GM10248 (cell line): ENCODE measurements at regions of chr2 and their contacts with region 1.

Region 1: DNA sequence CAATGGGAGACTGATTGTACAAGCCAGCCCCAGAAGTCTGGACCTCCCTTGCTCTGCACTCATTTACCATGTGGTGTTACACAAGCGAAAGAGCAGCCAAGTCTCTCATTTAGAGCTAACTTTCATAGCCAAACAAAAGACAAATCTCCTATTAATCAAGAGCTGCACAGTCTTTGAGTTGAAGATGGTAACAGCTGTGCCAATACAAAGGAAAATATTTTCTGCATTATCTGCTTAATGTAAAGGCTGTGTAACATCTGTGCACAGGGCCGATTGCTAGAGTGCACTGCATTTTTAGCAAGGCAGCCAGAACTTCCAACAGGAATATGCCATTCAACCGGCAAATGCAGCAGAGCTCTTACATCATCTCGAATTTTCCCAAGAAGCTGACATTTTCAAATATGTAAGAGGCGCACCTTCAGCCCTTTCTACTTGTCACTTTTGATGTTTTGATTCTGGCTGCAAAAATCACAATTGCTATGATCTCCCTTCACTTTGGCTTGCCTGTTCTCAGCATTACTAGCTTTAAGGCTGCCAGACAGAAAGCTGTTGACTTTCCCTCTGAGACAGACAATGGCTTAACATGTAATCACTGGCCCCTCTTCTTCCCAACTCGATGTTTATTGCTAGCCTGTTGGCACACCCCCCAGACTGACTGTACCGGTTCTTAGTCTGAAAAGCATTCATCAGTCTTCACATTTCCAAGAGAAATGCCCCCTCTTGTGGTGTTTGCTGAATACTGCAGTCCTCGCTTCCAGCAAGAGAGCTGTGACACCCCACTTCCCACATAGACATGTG is 96.9 kb upstream of the TANK start:
- DNase-seq: peak; percentile 48
- CTCF ChIP-seq: peak; percentile 89

Region 2: GRCh38 chr2:160324161-160324800 is 739.1 kb before region 1 on chr2:
- CTCF ChIA-PET with region 1: interaction called, 18 read pairs
- POLR2A ChIA-PET with region 1: no interaction called
- DNase-seq: peak; percentile 29
- CTCF ChIP-seq: peak; percentile 60

Region 3: DNA sequence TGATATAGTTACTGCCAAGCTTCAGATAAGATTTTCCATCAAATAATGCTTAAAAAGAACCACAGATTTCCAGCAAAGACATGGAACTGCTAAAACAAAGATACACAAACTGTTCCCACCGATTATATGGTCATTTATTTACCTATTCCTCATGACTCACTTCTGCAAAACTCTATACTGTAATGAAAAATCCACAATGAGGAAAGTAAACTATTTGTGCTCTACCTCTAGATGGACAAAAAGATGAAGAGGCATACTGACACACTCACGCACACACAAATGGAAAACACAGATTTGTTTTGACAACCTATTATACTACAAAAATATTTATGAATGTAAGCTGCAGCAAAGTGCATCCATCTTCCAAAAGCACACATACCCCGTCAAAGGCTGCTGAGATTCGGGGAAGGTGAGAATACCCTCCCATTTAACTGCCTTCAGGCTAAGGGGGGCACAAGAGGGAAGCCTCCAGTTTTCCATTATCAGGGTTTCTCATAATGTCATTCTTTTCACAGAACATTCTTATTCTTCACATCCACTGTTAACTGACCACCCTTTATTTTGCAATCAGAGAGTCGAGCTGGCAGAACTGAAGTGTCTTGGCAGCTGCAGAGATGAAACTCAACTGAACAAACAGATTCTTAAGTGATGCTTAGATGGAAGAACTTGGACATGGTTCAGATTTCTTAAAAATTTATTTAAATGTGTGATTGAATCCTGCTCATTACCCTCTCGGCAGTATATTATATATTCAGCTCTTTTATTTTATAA is 19.1 kb before region 1 on chr2:
- CTCF ChIA-PET with region 1: interaction called, 36 read pairs
- POLR2A ChIA-PET with region 1: no interaction called
- DNase-seq: no peak
- CTCF ChIP-seq: no peak

Region 4: GRCh38 chr2:161077367-161078210 is 14.2 kb after region 1 on chr2:
- CTCF ChIA-PET with region 1: interaction called, 105 read pairs
- POLR2A ChIA-PET with region 1: no interaction called
- DNase-seq: peak; percentile 20
- CTCF ChIP-seq: no peak

Region 5: DNA sequence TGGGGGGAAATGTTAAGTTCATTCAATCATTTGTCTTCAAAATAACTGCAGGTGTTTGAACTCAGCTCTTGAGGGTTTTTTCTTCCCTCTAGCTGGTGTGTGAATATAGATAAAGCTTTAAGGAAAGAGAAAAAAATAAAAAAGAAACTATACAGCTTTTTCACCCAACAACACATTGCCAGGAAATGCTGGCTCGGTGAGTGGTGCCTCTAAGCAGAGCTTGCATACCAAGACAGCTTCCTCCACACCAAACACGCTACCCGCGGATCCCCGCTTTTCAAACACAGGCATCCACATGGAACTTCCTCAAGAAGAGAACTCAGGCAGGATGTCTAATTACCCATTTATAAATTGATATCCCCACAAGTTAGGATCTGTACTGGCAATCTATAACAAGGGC is 27.1 kb after region 1 on chr2:
- CTCF ChIA-PET with region 1: interaction called, 24 read pairs
- POLR2A ChIA-PET with region 1: no interaction called
- DNase-seq: peak; percentile 22
- CTCF ChIP-seq: no peak

Region 6: DNA sequence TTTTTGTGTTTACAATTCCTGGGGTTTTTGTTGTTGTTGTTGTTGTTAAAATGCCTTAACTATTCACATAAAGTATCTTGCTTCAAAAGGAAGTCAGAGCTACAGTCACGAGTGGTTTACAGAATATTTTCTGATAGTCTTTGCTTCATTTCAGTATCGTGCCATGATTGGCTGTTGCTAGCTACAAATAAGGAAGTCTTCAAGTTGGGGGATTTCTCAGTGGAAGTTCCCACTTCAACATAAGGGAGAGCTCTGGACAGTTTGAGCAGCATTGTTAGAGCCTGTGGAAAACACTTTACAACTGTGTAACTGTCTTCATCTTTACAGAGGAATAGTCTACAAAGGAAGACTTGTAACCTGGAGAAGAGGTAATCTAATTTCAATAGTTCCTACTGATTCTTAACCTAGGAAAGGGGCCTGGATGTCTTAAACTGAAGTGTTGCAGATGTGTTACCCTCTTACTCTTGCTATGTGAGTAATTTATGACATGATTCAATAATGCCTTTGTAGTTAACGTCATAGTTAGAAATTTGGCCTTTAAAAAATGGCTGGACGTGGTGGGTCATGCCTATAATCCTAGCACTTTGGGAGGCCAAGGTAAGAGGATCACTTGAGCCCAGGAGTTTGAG is 73.5 kb after region 1 on chr2:
- CTCF ChIA-PET with region 1: interaction called, 10 read pairs
- POLR2A ChIA-PET with region 1: no interaction called
- DNase-seq: peak; percentile 61
- CTCF ChIP-seq: no peak